Activated CD4-positive, alpha-beta memory T cell treated with anti-CD3 and anti-CD28 coated beads for 36 hours (primary cell): ENCODE measurements at regions of chr17 and their contacts with region 1.

Region 1: DNA sequence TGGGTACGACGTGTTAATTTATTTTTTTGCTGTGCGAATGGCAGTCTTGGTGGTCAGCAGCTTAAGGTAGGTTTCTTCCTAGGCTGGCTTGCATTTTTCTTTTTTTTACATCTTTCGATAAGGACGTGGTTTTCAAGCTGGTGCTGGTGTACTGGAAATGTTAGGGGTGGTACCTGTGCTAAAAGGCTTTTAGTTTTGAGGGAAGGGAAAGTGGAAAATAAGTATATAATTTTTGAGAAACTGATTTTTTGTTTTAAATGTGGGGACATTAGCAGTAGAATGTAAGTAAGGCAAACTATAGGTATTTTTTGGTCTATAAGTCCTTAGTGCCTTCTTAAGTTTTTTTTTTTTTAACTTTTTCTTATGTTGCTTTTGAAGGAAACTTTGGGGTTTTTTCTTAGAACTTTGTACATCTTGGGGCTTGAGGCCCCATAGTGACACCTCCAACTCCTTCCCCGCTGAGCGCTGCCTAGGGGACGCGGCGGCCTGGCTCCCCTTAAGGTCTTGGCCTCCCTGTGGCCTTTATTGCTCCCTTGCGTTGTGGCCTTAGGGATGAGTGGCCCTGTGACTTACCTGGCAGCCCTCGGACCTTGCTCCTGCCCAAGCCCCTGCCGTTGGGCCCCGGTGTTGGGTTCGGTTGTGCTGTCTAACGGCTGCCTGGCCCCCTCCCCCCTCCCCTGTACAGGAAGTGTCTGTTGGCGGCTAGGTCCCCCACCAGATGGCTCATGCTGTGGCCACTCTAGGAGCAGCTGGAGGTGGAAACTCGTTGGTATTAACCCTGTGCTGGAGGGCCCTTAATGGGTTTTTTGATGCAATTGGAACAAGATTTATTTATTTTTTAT is 88.0 kb upstream of the RPRML start:
- DNase-seq: peak; percentile 85
- H3K4me3 Mint-ChIP-seq: peak overlapping the region; percentile 91
- H3K27ac Mint-ChIP-seq: peak overlapping the region; percentile 91
- H3K4me1 Mint-ChIP-seq: peaks cover 30% of the 10 kb centered on the region
- H3K27me3 Mint-ChIP-seq: no peaks in the 10 kb centered on the region

Region 2: DNA sequence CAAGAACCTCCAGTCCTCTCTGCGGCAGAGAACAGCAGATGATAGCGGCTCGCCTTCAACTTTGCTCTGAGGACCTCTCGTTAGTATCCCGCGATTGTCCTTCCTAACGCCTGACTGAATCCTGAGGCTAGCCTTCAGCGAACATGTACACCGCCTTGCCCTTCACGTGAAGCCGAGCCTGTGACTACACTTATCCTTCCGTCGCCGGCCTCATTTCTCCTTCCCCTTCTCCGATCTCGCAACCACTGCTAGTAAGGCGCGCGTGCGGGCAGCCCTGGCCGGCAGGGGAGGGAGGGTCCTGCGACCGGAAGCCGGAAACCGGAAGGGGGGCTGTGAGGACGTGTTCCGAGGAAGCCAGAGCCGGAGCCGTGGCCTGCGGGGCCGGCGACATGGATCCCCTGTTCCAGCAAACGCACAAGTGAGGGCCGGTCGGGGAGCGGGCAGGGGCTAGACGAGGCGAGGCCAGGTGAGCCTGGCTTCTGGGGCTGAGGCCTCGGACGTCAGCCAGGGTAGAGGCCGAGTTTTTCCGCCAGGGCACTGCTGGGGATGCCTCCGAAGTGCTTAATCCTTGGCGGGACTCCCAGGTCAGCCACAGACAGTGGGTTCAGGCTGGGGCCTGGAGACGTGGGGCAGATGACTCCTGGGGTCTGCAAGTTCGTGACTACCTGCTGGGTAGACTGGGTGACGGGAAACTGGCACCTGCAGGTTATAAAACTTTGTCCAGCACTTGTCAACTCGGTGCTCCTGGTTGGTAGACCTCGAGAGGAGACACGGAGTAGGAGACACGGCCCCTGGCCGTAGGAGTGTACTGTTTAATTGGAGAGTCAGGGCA is 144.0 kb before region 1 on chr17 and contains the start of gene GOSR2:
- CTCF ChIA-PET with region 1: no interaction called
- POLR2A ChIA-PET with region 1: no interaction called
- intact Hi-C with region 1: loop called (anchors 5 kb)
- DNase-seq: peak; percentile 93
- H3K4me3 Mint-ChIP-seq: peak within 1 kb of the TSS; percentile 81
- H3K27ac Mint-ChIP-seq: peak within 1 kb of the TSS; percentile 99
- H3K4me1 Mint-ChIP-seq: peaks cover 51% of the 10 kb centered on the region
- H3K27me3 Mint-ChIP-seq: no peaks in the 10 kb centered on the region
- total RNA-seq, gene GOSR2: 40.1 to 40.8 TPM